ENCODE measurements at regions of chr1 and their contacts with region 1.

Region 1: DNA sequence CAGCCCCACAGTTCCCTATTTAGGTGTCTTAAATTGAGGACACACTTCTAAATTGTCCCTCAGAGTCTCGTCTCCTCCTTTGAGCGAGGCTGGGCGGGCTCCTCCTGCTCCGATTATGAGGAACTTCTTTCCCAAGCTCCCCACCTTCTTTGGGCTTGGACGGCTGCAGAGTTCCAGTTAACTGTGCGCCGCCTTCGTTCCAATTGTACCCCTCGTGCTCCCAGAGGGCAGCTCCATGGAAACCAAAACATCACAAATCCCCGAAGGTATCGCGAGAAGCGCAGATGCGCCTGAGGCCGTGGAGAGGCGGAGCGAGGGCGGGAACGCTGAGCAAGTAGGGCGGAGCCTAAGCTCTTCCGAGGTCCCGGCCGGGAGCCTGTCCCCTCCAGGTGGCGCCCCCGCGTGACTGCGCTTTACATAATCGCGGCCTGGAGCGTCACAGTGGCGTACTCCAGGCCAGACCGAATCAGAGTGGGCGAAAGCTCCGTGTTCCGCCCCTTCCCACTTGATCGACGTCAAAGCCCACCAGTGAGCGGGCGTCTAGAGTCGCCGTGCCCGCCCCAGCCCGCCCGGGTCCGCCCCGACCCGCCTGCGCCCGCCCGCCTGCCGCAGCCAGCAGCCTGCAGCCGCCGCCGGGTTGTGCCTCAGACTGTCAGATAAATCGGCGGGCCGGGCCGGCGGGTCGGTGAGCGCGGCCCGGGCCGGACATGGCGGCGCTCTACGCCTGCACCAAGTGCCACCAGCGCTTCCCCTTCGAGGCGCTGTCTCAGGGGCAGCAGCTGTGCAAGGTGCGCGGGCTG is at the start of gene FAM76A:
- DNase-seq: peak; percentile 100
- H3K4me3 Mint-ChIP-seq: peak within 1 kb of the TSS; percentile 81
- H3K27ac Mint-ChIP-seq: peak within 1 kb of the TSS; percentile 79
- H3K4me1 Mint-ChIP-seq: peaks cover 16% of the 10 kb centered on the region
- H3K27me3 Mint-ChIP-seq: no peaks in the 10 kb centered on the region
- total RNA-seq, gene FAM76A: 8.1 to 11.8 TPM

Region 2: GRCh38 chr1:27561124-27561899 is 164.3 kb before region 1 on chr1:
- CTCF ChIA-PET with region 1: no interaction called
- POLR2A ChIA-PET with region 1: no interaction called
- intact Hi-C with region 1: no loop called
- DNase-seq: no peak
- H3K4me3 Mint-ChIP-seq: no peak overlapping the region
- H3K27ac Mint-ChIP-seq: no peak overlapping the region
- H3K4me1 Mint-ChIP-seq: peaks cover 11% of the 10 kb centered on the region
- H3K27me3 Mint-ChIP-seq: no peaks in the 10 kb centered on the region

Region 3: DNA sequence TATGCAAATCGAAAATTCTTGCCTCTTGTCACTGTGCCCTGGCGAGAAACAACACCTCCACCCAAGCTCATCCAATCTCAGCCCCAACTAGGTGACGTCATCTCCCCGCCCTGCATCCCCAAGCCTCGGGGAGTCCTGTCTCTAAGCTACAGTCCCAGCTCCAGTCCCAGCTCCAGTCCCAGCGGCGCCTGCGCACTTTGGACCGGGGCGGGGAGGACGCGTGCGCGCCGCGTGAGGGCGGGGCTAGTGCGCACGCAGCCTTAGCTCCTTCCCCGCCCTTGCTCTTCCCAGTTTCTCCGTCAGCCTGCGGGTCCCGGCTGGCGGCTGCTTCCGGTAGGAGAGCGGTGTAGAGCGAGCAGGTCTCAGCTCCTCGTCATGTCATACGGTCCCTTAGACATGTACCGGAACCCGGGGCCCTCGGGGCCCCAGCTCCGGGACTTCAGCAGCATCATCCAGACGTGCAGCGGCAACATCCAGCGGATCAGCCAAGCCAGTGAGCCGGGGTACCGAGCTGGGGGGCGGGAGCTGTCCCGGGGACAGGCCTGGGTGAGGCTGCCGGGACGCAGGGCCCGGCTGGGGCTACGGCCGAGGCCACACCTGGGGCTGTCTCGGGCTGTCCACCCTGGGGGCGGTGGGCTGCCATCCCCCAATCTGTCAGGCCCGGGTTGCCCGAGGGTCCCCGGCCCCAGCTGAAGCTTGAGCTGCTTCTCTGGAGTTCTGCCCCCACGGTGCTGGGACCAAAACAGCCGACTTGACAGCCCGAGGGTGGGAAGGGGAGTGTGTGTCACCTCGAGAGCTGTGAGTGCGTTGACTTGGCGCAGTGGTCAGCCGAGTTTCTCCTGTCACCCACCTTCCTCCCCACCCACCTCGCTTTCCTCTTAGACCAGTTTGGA is 47.6 kb after region 1 on chr1 and contains the start of gene STX12:
- CTCF ChIA-PET with region 1: interaction called, 12 read pairs
- POLR2A ChIA-PET with region 1: interaction called, 34 read pairs
- intact Hi-C with region 1: loop called (anchors 1 kb)
- DNase-seq: peak; percentile 100
- H3K4me3 Mint-ChIP-seq: peak within 1 kb of the TSS; percentile 95
- H3K27ac Mint-ChIP-seq: peak within 1 kb of the TSS; percentile 99
- H3K4me1 Mint-ChIP-seq: peaks cover 35% of the 10 kb centered on the region
- H3K27me3 Mint-ChIP-seq: no peaks in the 10 kb centered on the region
- total RNA-seq, gene STX12: 31.8 to 32.0 TPM

Region 4: GRCh38 chr1:27830621-27831424 is 105.2 kb after region 1 on chr1 and contains the start of gene PPP1R8:
- CTCF ChIA-PET with region 1: interaction called, 4 read pairs
- POLR2A ChIA-PET with region 1: interaction called, 7 read pairs
- intact Hi-C with region 1: loop called (anchors 10 kb)
- DNase-seq: peak; percentile 94
- H3K4me3 Mint-ChIP-seq: peak within 1 kb of the TSS; percentile 92
- H3K27ac Mint-ChIP-seq: peak within 1 kb of the TSS; percentile 87
- H3K4me1 Mint-ChIP-seq: peaks cover 34% of the 10 kb centered on the region
- H3K27me3 Mint-ChIP-seq: no peaks in the 10 kb centered on the region
- total RNA-seq, gene PPP1R8: 42.9 to 43.8 TPM

Measured in activated CD4-positive, alpha-beta memory T cell treated with anti-CD3 and anti-CD28 coated beads for 36 hours (primary cell).